ENCODE measurements at regions of chr15 and their contacts with region 1.

Region 1: DNA sequence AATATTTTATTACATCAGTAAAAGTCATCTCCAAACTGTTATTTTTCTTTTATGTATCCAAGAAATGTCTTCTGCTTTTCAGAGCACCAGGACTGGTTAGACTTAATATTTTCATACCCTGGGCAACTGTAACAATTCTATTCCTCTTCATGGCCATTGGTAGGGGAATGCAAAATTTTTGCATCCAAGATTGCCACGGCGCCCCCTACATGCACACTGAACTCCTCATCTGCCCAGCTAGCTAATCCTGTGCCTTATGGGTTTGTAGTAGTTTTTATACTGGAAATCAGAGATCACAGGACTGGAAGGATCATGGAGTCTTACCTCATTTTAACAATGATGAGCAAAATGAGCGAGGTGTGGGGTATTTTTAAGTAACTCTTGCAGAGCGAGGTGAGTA is 74.2 kb downstream of the CRTC3 start:
- DNase-seq: peak in 1 of 2 donors; percentile 81
- ATAC-seq: no peak
- H3K4me3 ChIP-seq: no peak overlapping the region
- H3K27ac ChIP-seq: no peak overlapping the region
- H3K4me1 ChIP-seq: no peaks in the 10 kb centered on the region
- H3K27me3 ChIP-seq: no peaks in the 10 kb centered on the region

Region 2: DNA sequence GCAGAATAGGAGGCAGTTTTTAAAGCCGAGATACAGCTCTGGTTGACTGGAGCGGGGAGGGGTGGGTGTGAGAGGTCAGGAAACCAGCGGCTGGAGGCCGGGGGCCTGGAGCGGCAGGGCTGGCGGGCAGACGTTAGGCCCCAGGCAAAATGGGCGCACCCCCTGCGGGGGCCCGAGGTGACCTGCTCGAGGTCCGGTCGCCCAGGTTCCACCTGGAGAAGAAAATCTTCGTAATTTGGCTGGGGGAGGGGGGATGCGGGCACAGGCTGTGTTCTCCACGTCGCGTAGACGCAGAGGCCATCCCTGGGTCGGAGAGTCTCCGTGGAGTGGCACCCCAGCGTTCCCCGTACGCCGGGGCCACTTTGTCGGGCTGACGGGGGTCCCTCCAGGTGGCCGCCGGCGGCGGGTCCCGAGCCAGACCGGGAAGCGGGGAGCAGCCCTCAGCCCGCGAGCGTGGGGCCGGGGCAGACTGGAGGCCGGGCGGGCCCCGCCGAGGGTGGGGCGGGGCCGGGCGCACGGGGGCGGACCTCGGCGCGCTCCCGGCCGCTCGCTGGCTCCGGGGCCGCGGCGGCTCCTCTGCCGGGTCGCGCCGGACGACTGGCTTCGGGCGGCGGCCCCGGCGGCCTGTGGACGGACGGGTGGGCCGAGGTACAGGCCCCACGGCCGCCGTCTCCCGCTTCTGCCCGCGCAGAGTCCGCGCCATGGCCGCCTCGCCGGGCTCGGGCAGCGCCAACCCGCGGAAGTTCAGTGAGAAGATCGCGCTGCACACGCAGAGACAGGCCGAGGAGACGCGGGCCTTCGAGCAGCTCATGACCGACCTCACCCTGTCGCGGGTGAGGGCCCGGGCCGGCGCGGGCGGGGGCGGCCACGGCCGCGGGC is 74.3 kb before region 1 on chr15 and contains the start of gene CRTC3:
- intact Hi-C with region 1: loop called (anchors 5 to 10 kb)
- DNase-seq: peak; percentile 67 to 86
- ATAC-seq: peak; percentile 91
- H3K4me3 ChIP-seq: peak within 1 kb of the TSS; percentile 80 to 94
- H3K27ac ChIP-seq: peak within 1 kb of the TSS; percentile 73 to 97
- H3K4me1 ChIP-seq: peaks cover 0 to 5% of the 10 kb centered on the region in 2 donors
- H3K27me3 ChIP-seq: no peaks in the 10 kb centered on the region
- total RNA-seq, gene CRTC3: 60.8 to 82.2 TPM